ENCODE measurements at regions of chr16 and their contacts with region 1.

Region 1: GRCh38 chr16:66894948-66895688 is 14.8 kb downstream of the PDP2 start:
- DNase-seq: no peak
- H3K4me3 ChIP-seq: no peak overlapping the region
- CTCF ChIP-seq: peak; percentile 89

Region 2: DNA sequence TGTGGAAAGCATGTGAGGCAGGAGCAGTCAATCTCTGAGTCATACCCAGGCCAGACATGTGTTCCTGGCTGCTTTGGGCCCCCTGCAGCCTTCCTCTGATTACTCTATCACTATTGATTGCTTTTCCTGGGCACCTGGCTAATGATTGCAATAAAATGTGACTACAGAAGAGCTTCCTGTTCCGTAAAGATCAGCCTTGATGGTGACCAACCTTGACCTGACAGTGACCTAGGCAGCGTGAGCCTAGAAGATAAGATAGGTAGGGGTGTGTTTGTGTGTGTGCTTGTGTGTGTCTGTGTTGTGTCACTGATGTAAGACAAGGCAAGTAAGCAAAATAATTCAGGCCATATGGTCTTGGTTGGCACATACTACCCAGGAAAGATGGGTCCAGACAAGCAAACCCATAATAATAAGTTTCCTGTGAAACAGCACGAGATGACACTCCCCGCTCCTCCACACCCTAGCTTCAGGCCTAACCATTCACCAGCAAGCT is 1405.5 kb before region 1 on chr16:
- CTCF ChIA-PET with region 1: no interaction called
- POLR2A ChIA-PET with region 1: no interaction called
- DNase-seq: no peak
- H3K4me3 ChIP-seq: no peak overlapping the region
- CTCF ChIP-seq: no peak

Region 3: GRCh38 chr16:66880288-66881013 is 14.7 kb before region 1 on chr16 and contains the start of gene PDP2:
- CTCF ChIA-PET with region 1: interaction called, 69 read pairs
- POLR2A ChIA-PET with region 1: no interaction called
- DNase-seq: peak; percentile 52
- H3K4me3 ChIP-seq: peak within 1 kb of the TSS; percentile 96
- CTCF ChIP-seq: no peak

Region 4: GRCh38 chr16:66911112-66911511 is 16.0 kb after region 1 on chr16:
- CTCF ChIA-PET with region 1: interaction called, 350 read pairs
- POLR2A ChIA-PET with region 1: no interaction called
- DNase-seq: no peak
- H3K4me3 ChIP-seq: no peak overlapping the region
- CTCF ChIP-seq: no peak

Region 5: GRCh38 chr16:66934153-66934838 is 39.2 kb after region 1 on chr16 and contains the start of gene CIAO2B:
- CTCF ChIA-PET with region 1: interaction called, 350 read pairs
- POLR2A ChIA-PET with region 1: interaction called, 4 read pairs
- DNase-seq: no peak
- H3K4me3 ChIP-seq: peak within 1 kb of the TSS; percentile 97
- CTCF ChIP-seq: no peak

Region 6: GRCh38 chr16:66954097-66954659 is 59.1 kb after region 1 on chr16:
- CTCF ChIA-PET with region 1: interaction called, 35 read pairs
- POLR2A ChIA-PET with region 1: no interaction called
- DNase-seq: no peak
- H3K4me3 ChIP-seq: no peak overlapping the region
- CTCF ChIP-seq: peak; percentile 78

Region 7: DNA sequence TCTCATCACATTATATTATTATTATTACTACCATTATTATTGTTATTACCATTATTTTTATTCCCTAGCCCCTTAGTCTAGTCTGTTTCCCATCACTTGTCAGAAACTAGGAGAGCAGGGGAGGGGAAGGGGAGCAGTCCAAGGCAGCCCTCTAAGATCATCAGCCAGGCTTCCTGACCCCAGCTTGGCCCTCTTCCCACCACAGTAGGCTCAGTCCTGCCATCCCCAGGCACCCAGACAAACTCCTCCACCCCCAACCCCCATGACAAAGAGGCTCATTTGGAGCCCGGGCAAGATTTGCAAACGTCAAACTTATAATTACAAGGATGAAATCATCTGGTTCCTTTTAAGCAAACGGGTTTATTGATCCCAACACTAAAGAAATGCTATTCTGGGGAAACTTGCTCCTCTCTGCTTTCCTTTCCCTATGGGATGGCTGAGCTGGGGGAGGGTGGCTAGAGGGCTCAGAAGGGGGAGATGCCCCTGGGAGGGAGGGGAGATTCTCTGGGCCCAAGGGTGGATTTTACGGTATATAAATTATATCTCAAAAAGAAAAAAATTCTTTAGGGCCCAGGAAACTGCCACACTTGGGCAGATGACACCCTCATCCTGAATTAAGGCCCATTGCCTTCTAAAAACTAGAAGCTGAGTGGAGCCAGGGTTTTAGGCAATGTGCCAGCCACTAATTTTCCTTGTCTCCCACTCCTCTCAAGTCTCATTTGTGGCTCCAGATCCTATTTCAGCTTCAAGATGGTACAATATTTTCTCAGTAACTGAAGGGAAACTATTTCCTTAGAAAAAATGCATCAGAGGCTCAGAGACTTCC is 129.5 kb after region 1 on chr16:
- CTCF ChIA-PET with region 1: no interaction called
- POLR2A ChIA-PET with region 1: no interaction called
- DNase-seq: no peak
- H3K4me3 ChIP-seq: no peak overlapping the region
- CTCF ChIP-seq: no peak

Region 8: DNA sequence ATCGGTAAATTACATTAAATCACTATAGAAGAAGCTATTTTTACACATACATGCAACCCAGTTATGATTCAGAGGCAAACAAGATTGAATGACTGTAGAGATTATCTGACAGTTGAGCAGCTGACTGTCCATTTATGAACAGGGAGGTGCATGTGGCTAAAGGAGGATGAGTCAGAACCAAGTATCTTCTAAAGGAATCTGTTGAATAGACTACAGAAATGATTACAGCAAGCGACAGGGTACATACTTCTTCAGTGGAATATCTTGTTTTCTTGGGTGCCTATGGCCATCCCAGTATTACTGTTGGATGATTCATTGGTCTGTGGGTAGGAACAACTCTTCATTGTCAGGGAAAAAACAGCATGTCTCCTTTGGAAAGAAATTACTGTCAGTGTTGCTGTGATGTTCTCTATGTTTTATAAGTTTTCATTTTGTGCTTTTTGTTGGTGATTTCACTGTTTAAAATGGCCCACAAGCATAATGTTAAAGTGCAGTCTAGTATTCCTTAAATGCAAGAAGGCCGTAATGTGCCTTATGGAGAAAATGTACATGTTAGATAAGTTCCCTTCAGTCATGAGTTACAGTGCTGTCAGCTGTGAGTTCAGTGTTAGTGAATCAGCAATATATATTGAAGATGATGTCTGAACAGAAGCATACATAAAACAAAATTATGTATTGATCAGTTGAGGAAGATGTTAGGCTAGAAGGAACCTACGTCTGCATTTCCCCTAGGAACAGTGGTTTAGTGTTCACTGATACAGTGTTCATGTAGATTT is 160.8 kb after region 1 on chr16:
- CTCF ChIA-PET with region 1: no interaction called
- POLR2A ChIA-PET with region 1: no interaction called
- DNase-seq: peak; percentile 96
- H3K4me3 ChIP-seq: 0 out of 2 replicates have a peak overlapping the region, but pooled peaks have one; percentile 6
- CTCF ChIP-seq: no peak

Region 9: GRCh38 chr16:67183627-67184328 is 288.7 kb after region 1 on chr16 and contains the start of gene MATCAP1:
- CTCF ChIA-PET with region 1: interaction called, 10 read pairs
- POLR2A ChIA-PET with region 1: no interaction called
- DNase-seq: peak; percentile 82
- H3K4me3 ChIP-seq: peak within 1 kb of the TSS; percentile 74
- CTCF ChIP-seq: no peak

Measured in AG04449 (cell line).